OCI-LY7 (cell line): ENCODE measurements at regions of chr7 and their contacts with region 1.

Region 1: GRCh38 chr7:71733107-71733870 is 601.3 kb downstream of the GALNT17 start:
- DNase-seq: peak; percentile 65
- H3K4me3 ChIP-seq: no peak overlapping the region
- H3K27ac ChIP-seq: no peak overlapping the region
- H3K4me1 ChIP-seq: no peaks in the 10 kb centered on the region
- CTCF ChIP-seq: peak; percentile 90

Region 2: GRCh38 chr7:70829221-70830059 is 903.8 kb before region 1 on chr7:
- CTCF ChIA-PET with region 1: interaction called, 4 read pairs
- POLR2A ChIA-PET with region 1: no interaction called
- intact Hi-C with region 1: loop called (anchors 1 kb)
- DNase-seq: peak; percentile 71
- H3K4me3 ChIP-seq: no peak overlapping the region
- H3K27ac ChIP-seq: no peak overlapping the region
- H3K4me1 ChIP-seq: no peaks in the 10 kb centered on the region
- CTCF ChIP-seq: peak; percentile 87

Region 3: GRCh38 chr7:70856866-70857630 is 876.2 kb before region 1 on chr7:
- CTCF ChIA-PET with region 1: no interaction called
- POLR2A ChIA-PET with region 1: no interaction called
- intact Hi-C with region 1: loop called (anchors 1 kb)
- DNase-seq: peak; percentile 58
- H3K4me3 ChIP-seq: no peak overlapping the region
- H3K27ac ChIP-seq: no peak overlapping the region
- H3K4me1 ChIP-seq: no peaks in the 10 kb centered on the region
- CTCF ChIP-seq: peak; percentile 96

Region 4: GRCh38 chr7:71539615-71540014 is 193.7 kb before region 1 on chr7:
- CTCF ChIA-PET with region 1: no interaction called
- POLR2A ChIA-PET with region 1: interaction called, 10 read pairs
- intact Hi-C with region 1: no loop called
- DNase-seq: no peak
- H3K4me3 ChIP-seq: no peak overlapping the region
- H3K27ac ChIP-seq: no peak overlapping the region
- H3K4me1 ChIP-seq: no peaks in the 10 kb centered on the region
- CTCF ChIP-seq: no peak